Activated T-helper 1 cell treated with anti-CD3 and anti-CD28 coated beads, Interleukin-12 subunit alpha, Interleukin-12 subunit beta, Interleukin-2, Interleukin-4 antibody, amounts not matched to agents 30 ng/mL and 10 ng/mL and 1 ng/mL, durations not matched to agents 14 hours and 24 hours and 36 hours (primary cell): ENCODE measurements at regions of chr9 and their contacts with region 1.

Region 1: DNA sequence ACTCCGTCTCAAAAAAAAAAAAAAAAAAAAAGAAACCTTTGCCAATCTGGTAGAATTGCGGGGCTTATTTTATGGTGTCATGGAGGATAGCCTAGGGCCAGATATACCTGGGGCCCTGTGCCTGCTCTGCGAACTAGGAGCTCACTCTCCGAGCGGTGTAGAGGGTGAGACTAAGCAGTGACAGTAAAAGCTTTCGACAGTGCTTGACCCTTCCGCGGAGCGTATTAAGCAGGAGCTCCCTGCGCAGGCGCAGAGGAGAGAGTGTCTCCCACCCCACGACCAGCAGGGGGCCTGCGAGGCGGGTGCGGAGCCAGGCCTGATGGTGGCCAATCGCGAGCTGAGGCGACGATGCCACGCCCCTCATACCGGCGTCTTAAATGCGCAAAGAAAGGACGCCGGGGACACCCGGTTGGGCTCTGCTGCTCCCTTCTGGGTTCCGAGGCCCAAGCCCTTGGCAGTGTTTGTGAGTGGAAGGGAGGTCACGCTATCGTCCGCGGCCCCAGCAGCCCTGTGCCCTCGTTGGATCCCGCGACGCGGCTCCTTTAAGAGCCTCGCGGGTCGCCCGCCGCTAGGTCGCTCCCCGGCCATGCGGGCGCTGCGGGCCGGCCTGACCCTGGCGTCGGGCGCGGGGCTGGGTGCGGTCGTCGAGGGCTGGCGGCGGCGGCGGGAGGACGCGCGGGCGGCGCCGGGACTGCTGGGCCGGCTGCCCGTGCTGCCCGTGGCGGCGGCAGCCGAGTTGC is at the start of gene ENDOG:
- DNase-seq: peak; percentile 99
- H3K4me3 Mint-ChIP-seq: peak within 1 kb of the TSS; percentile 88
- H3K27ac Mint-ChIP-seq: peak within 1 kb of the TSS; percentile 79
- H3K4me1 Mint-ChIP-seq: peaks cover 14% of the 10 kb centered on the region
- H3K27me3 Mint-ChIP-seq: no peaks in the 10 kb centered on the region
- total RNA-seq, gene ENDOG: 22.1 and 26.2 TPM in 2 replicates

Region 2: GRCh38 chr9:128504485-128505413 is 313.5 kb before region 1 on chr9 and contains the start of gene GLE1:
- intact Hi-C with region 1: loop called (anchors 1 kb)
- DNase-seq: peak; percentile 97
- H3K4me3 Mint-ChIP-seq: peak within 1 kb of the TSS; percentile 99
- H3K27ac Mint-ChIP-seq: peak within 1 kb of the TSS; percentile 99
- H3K4me1 Mint-ChIP-seq: peaks cover 23% of the 10 kb centered on the region
- H3K27me3 Mint-ChIP-seq: no peaks in the 10 kb centered on the region
- total RNA-seq, gene GLE1: 51.4 and 52.0 TPM in 2 replicates

Region 3: GRCh38 chr9:128688512-128689292 is 129.6 kb before region 1 on chr9 and contains the start of gene SET:
- intact Hi-C with region 1: loop called (anchors 2 kb)
- DNase-seq: peak; percentile 93
- H3K4me3 Mint-ChIP-seq: peak within 1 kb of the TSS; percentile 87
- H3K27ac Mint-ChIP-seq: peak within 1 kb of the TSS; percentile 98
- H3K4me1 Mint-ChIP-seq: peaks cover 66% of the 10 kb centered on the region
- H3K27me3 Mint-ChIP-seq: no peaks in the 10 kb centered on the region
- total RNA-seq, gene SET: 775 and 795 TPM in 2 replicates

Region 4: DNA sequence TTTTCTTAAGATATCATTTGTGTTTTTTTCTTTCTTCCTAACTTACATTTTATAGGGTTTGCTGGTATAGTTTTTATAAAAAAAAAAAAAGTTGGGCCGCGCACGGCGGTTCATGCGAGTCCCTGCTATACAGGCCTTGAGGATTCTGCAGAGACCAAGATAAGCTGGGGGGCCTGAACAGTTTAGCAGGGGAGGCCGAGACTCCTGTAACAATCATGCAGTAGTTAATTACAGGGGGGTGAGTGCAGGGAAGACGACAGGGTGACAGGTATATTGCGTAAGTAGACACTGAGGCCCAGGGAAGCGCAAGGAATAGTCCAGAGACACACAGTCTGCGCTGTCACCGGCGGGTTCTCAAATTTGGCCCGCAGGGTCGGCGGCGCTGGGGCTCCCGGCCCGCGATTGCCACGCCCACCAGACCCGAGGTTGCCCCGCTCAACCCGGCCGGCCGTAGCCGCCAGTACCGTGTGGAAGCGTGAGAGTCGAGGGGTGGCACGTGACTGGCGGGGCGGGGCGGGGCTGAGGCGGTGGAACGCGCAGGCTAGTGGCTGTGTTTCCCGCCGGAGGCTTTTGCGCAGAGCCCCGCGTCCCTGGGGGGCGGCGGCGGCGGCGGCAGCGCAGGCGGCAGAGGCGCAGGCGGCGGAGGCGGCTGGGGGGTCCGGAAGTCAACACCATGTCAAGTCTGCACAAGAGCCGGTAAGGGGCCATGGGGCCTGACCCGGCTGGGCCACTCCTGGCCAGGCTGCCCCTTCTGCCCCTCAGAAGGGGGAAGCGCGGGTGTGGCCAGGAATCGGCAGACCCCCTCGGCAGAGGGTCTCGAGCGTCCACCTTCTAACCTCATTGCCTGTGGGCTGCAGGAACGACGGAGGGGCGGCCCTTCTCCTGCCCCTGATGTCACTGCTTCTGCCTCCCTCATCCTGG is 31.3 kb before region 1 on chr9 and contains the start of gene TBC1D13:
- intact Hi-C with region 1: loop called (anchors 1 kb)
- DNase-seq: peak; percentile 84
- H3K4me3 Mint-ChIP-seq: peak within 1 kb of the TSS; percentile 97
- H3K27ac Mint-ChIP-seq: peak within 1 kb of the TSS; percentile 89
- H3K4me1 Mint-ChIP-seq: peaks cover 22% of the 10 kb centered on the region
- H3K27me3 Mint-ChIP-seq: no peaks in the 10 kb centered on the region
- total RNA-seq, gene TBC1D13: 21.2 and 22.3 TPM in 2 replicates

Region 5: DNA sequence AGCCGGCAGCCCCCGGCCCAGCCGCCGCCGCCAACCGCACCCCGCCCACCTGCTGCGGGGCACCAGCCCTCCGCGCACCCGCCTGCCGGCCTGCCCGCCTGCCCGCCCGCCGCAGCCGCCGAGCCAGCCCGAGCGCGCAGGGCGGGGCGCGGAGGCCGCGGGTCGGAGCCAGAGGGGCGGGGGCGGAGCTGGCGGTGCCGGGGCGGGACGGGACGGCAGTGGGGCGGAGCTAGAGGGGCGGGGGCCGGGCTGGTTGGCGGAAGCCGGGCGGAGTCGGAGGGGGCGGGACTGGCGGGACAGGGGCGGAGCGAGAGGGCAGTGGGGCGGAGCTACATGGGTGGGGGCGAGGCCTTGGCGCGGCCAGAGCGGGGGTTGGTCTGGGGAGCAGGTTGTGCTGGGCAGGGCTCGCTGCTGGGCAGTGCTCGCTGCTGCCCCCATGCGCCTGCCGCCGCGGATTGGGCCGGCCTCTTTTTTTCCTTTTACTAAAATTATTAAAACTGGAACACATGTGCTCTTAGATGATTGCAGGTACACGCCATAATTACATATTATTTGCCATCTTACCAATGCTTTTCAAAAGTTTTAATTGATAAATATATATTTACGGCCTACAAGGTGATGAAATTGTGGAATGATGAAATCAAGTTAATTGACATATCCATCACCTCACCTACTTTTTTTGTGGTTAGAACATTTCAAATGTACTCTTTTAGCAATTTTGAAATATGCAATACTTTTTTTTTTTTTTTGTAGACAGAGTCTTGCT is 210.1 kb after region 1 on chr9 and contains the start of gene SH3GLB2:
- intact Hi-C with region 1: loop called (anchors 5 kb)
- DNase-seq: peak; percentile 85
- H3K4me3 Mint-ChIP-seq: peak within 1 kb of the TSS; percentile 91
- H3K27ac Mint-ChIP-seq: peak within 1 kb of the TSS; percentile 80
- H3K4me1 Mint-ChIP-seq: peaks cover 24% of the 10 kb centered on the region
- H3K27me3 Mint-ChIP-seq: no peaks in the 10 kb centered on the region
- total RNA-seq, gene SH3GLB2: 71.1 and 74.8 TPM in 2 replicates